ENCODE measurements at regions of chr17 and their contacts with region 1.

Region 1: DNA sequence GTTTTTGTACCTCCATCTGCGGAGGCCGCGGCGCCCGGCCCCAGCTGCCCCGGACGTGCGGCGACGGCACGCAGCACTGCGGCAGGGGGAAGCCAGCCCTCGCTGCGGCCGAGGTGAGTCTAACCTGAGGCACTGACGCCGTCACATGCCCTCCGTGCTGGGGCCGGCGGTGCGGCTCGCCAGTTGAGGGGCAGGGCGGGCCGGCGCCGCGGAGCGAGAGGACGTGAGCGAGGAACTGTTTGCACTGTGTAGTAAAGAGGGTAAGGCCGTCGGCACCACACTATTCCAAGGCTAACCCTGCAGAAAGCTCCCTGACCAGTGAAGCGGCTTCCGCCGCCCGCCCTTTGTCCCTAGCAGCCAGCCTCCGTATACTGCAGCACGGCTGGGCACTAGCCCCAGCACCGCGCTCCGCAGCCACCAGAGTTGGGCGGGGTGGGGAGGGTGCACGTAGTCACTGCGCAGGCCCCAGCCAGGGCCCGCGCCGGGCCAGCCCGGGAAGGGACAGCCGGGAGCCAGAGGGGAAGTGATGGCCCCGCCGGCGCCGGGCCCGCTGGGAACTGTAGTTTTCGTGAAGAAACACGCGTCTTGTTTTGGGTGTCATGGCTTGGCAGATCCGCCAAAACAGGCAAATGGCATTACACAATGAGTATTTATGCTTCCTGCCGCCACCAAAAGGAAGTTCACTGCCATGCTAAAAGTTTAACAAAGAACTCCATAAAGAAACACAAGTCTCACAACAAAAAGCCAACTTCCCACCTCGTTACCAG is 580 bp upstream of the KANSL1 start:
- DNase-seq: peak; percentile 96 to 98
- ATAC-seq: peak; percentile 81

Region 2: GRCh38 chr17:46044286-46044928 is 149.4 kb before region 1 on chr17:
- intact Hi-C with region 1: loop called in 1 of 2 experiments (anchors 5 kb)
- DNase-seq: peak; percentile 81
- ATAC-seq: peak; percentile 80